IMR-90 (cell line): ENCODE measurements at regions of chr7 and their contacts with region 1.

Region 1: DNA sequence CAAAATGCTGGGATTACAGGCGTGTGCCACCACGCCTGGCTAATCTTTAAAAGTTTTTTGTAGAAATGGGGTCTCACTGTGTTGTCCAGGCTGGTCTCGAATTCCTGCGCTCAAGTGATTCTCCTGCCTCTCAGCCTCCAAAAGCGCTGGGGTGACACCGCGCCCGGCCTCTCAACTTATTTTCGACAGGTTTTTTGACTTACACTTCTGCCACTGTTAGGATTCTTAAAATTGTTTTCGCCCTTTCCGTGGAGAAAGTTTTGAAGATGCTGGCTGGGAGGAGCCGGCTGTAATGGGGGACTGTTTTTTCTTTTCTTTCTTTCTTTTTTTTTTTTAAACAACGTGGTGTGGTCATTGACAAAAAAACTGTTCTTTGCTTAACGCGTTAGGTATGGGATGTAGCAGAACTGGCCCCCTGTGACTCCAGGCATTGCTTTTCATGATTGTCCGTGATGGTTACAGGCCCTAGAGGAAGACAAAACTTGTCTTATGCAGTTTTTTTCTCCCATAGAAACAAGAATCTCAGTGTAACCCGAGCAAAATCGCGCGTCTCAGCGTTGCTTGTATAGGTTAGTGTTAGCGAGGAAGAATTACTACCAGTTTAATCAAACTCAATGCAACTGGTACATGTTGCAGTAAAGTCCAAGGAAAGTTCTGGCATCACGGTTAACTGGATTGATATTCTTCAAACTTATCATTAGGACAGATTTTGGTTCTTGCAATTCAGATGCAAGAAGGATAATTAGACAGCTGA is 72.2 kb downstream of the DAGLB start:
- DNase-seq: peak; percentile 49
- ATAC-seq: no peak
- H3K4me3 ChIP-seq: peak overlapping the region; percentile 64
- H3K27ac ChIP-seq: peak overlapping the region; percentile 85
- H3K4me1 ChIP-seq: peaks cover 7% of the 10 kb centered on the region
- H3K27me3 ChIP-seq: no peaks in the 10 kb centered on the region
- CTCF ChIP-seq: no peak
- POLR2A ChIP-seq: no peak
- RAD21 ChIP-seq: no peak

Region 2: GRCh38 chr7:6307762-6308161 is 67.8 kb before region 1 on chr7:
- CTCF ChIA-PET with region 1: interaction called, 10 read pairs
- POLR2A ChIA-PET with region 1: no interaction called
- dilution Hi-C with region 1: no loop called
- in situ Hi-C with region 1: no loop called
- intact Hi-C with region 1: no loop called
- DNase-seq: no peak
- ATAC-seq: no peak
- H3K4me3 ChIP-seq: no peak overlapping the region
- H3K27ac ChIP-seq: no peak overlapping the region
- H3K4me1 ChIP-seq: peaks cover 6% of the 10 kb centered on the region
- H3K27me3 ChIP-seq: no peaks in the 10 kb centered on the region
- CTCF ChIP-seq: no peak
- POLR2A ChIP-seq: no peak
- RAD21 ChIP-seq: no peak

Region 3: DNA sequence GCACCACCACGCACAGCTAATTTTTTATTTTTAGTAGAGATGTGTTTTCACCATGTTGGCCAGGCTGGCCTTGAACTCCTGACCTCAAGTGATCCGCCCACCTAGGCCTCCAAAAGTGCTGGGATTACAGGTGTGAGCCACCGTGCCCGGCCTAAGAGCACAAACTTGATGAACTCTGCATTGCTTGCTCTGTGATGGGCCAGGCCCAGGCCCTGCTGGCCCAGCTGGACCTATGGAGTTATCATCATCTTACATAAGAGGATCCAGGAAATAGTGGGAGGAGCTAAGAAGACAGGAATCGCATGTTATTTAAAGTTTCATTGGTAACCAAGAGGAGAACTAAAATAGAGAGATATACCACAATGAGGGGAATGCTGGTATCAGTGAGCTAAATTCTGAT is 14.7 kb before region 1 on chr7:
- CTCF ChIA-PET with region 1: no interaction called
- POLR2A ChIA-PET with region 1: no interaction called
- dilution Hi-C with region 1: no loop called
- in situ Hi-C with region 1: no loop called
- intact Hi-C with region 1: no loop called
- DNase-seq: peak; percentile 10
- ATAC-seq: no peak
- H3K4me3 ChIP-seq: no peak overlapping the region
- H3K27ac ChIP-seq: no peak overlapping the region
- H3K4me1 ChIP-seq: no peaks in the 10 kb centered on the region
- H3K27me3 ChIP-seq: no peaks in the 10 kb centered on the region
- CTCF ChIP-seq: no peak
- POLR2A ChIP-seq: no peak
- RAD21 ChIP-seq: no peak